MCF 10A (cell line): ENCODE measurements at regions of chr4 and their contacts with region 1.

Region 1: GRCh38 chr4:74793757-74794340 is 474 bp downstream of the BTC start:
- DNase-seq: peak; percentile 59
- H3K4me3 Mint-ChIP-seq: peak overlapping the region; percentile 97
- H3K27ac Mint-ChIP-seq: peak overlapping the region; percentile 92
- H3K4me1 Mint-ChIP-seq: peaks cover 11% of the 10 kb centered on the region
- H3K27me3 Mint-ChIP-seq: peaks cover 18% of the 10 kb centered on the region
- CTCF ChIP-seq: peak; percentile 36

Region 2: DNA sequence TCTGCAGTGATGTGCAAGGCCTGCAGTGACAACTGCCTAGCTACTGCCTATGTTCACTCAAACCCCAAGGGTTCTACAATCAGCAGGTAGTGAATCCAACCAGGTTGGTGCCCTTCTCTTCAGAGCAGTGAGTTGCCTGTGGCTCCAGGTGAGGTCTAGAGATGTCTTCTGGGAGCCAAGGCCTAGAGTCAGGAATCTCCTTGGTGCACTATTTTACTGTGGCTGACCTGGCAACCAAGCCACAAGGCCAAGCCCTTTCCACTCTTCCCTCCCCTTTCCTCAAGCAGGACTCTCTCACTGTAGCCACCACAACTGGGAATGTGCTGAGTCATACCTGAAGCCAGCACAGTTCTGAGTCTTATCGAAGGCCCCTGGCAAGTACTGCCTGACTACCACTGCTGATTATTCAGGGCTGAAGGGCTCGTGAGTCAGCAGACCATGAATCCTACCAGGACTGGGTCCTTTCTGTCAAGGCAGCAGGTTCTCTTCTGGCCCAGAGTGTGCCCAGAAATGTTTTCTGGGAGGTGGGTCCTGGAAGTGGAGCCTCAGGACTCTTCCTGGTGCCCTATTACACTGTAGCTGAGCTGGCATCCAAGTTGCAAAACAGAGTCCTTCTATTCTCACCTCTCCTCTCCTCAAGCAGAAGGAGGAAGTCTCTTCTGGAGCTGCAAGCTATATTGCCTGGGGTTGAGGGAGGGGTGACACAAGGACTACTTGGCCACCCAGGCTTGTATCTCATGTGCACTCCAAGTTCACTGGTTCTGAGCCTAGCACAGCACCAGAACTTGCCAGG is 111.1 kb before region 1 on chr4:
- CTCF ChIA-PET with region 1: interaction called, 6 read pairs
- POLR2A ChIA-PET with region 1: no interaction called
- intact Hi-C with region 1: loop called (anchors 2 kb)
- DNase-seq: peak; percentile 92
- H3K4me3 Mint-ChIP-seq: no peak overlapping the region
- H3K27ac Mint-ChIP-seq: peak overlapping the region; percentile 24
- H3K4me1 Mint-ChIP-seq: peaks cover 18% of the 10 kb centered on the region
- H3K27me3 Mint-ChIP-seq: no peaks in the 10 kb centered on the region
- CTCF ChIP-seq: no peak

Region 3: DNA sequence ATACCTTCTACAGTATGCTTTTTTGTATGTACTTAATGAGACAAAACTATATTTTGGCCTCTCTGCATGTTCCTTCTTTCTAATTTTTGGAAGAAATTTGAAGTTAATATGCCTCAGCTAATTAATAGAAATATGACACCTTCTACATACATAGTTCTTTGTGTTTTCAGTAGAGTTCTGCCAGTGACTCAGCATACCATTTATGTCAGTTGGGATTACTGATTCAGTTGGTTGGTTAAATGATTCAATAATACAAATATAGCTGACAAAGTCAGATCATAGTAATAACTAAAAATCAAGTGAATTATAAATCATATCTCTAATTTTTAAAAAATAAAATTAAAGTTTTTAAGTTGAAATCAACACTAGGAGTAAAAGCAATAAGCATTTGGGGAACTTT is 16.3 kb before region 1 on chr4:
- CTCF ChIA-PET with region 1: interaction called, 36 read pairs
- POLR2A ChIA-PET with region 1: interaction called, 16 read pairs
- intact Hi-C with region 1: no loop called
- DNase-seq: no peak
- H3K4me3 Mint-ChIP-seq: no peak overlapping the region
- H3K27ac Mint-ChIP-seq: no peak overlapping the region
- H3K4me1 Mint-ChIP-seq: peaks cover 5% of the 10 kb centered on the region
- H3K27me3 Mint-ChIP-seq: no peaks in the 10 kb centered on the region
- CTCF ChIP-seq: no peak